A549 (cell line): ENCODE measurements at regions of chr1 and their contacts with region 1.

Region 1: DNA sequence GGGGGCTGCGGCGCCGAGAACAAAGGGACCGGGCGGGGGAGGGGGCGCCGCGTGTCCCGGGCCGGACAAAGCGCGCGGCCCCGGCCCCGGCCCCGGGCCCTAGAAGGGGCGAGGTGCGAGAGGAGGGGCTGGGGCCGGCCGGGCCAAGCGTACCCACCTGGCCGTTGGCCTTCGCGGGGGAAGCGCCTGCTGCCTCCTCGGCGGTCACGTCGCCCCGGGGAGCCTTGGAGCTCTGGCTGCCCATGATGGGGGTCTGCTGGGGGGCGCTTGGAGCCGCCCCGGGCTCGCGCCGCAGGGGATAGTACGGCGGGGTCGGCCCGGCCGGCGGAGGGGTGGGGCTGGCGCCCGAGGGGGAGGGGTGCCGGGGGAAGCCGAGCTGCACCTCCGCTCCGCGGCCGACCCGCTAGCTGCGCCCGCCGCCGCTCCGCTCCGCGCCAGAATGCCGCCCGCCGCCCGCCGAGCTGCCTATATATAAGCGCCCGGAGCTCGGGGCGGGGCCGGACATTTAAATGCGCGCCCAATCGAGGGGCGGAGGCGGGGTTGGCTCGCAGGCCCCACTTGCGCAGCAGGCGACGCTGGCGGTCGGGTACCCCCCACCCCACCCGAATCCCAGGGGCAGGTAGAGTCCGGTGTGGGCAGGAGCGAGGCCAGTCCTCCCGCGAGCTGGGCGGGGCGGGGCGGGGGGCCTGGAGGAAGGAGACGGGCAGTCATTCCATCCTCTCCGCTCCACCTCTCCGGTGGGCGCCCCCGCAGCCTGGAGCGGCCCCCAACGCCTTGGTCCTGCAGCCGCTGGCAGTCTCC is at the start of gene MARCKSL1:
- DNase-seq: peak; percentile 43 to 54
- ATAC-seq: peak; percentile 62 to 73
- H3K4me3 ChIP-seq: peak within 1 kb of the TSS; percentile 100
- H3K27ac ChIP-seq: peak within 1 kb of the TSS; percentile 96 to 98
- H3K4me1 ChIP-seq: peaks cover 33% of the 10 kb centered on the region
- CTCF ChIP-seq: no peak
- EP300 ChIP-seq: no peak
- POLR2A ChIP-seq: peak; percentile 90
- RAD21 ChIP-seq: no peak
- polyA plus RNA-seq, gene MARCKSL1: 73.2 and 89.4 TPM in 2 replicates

Region 2: GRCh38 chr1:32240140-32240951 is 95.6 kb before region 1 on chr1:
- CTCF ChIA-PET with region 1: interaction called, 3 read pairs
- POLR2A ChIA-PET with region 1: interaction called, 16 read pairs
- DNase-seq: peak; percentile 53 to 75
- ATAC-seq: peak; percentile 76 to 85
- H3K4me3 ChIP-seq: peak overlapping the region; percentile 56
- H3K27ac ChIP-seq: peak overlapping the region; percentile 79 to 94
- H3K4me1 ChIP-seq: peaks cover 41% of the 10 kb centered on the region
- CTCF ChIP-seq: peak; percentile 36
- EP300 ChIP-seq: no peak
- POLR2A ChIP-seq: peak; percentile 71
- RAD21 ChIP-seq: peak; percentile 6 to 37; a peak in 2 of 5 replicates

Region 3: DNA sequence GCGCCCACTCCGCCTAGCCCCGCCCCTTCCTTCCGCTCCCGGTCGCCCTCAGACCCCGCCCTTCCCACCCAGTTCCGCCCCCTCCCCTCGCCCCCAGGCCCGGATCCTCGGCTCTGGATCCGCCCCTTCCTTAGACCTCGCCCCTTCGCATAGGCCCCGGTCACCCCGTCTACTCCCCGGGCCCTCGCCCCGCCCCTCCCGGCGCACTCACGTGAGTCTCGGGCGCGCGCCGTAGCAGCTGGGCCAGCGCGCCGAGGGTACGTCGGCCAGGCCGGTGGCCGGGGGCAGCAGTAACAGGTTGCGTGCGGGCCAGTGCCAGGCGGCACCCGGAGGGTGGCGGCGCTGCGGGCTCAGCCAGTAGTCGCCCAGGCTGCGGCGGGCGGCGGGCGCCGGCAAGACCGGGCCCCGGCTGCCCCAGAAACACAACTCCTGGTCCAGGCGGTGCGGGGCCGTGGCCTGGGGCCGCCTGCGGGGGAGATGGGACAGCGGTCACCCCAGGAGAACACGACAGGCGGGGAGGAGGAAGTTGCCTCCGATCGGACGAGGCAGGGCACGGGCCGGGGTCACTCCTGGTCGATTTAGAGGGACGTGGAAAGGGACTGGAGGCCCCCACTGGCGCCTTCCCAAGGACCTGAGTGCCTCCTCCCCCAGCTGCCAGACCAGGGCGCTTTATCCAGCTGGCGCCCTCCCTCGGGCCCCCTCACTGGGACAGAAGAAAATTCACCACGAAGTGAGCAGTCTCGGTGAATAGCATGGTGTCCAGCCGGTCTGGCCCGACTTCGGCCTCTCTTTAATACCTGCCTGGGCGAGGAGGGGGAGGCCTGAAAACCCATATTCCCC is 15.6 kb after region 1 on chr1:
- CTCF ChIA-PET with region 1: interaction called, 3 read pairs
- POLR2A ChIA-PET with region 1: interaction called, 17 read pairs
- DNase-seq: peak; percentile 82 to 92
- ATAC-seq: peak; percentile 84 to 93
- H3K4me3 ChIP-seq: peak overlapping the region; percentile 83
- H3K27ac ChIP-seq: peak overlapping the region; percentile 96 to 98
- H3K4me1 ChIP-seq: peaks cover 7% of the 10 kb centered on the region
- CTCF ChIP-seq: no peak; the same call in 2 of the 3 replicates
- EP300 ChIP-seq: no peak
- POLR2A ChIP-seq: peak; percentile 78
- RAD21 ChIP-seq: no peak; a peak in 1 of 5 replicates

Region 4: DNA sequence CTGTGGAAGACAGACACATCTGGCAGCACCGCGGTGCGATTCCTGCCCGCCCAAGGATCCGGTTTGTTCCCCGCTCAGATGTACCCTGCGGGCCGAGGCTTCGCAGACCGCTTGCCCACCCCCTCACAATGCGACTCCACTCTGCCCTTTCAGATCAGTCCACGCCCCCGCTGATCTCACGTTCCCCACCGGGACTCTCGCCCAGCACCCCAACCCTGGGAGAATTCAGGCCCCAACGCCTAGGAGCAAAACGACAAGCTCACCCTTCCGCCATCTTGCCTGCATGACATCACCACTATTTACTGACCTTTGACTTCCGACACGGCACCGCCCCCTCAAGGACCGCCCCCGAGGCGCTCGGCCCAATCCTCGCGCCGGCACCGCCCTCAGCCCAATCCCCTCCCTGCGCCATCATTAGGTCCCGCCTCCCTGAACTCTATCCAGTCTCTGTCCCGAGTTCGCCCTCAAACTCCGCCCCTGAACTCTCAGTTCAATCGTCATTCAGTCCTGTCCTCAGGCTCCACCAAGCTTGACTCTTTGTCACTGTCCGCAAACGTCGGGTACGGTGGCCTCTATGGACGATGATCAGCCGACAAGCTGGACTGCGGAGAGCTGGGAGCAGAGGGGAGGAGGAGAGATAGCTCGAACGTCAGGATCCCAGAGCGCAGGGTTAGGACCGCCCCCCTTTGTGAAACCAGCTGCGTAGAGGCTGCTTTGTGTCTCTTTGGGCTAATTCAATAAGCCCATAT is 58.3 kb after region 1 on chr1 and contains the start of gene BSDC1:
- CTCF ChIA-PET with region 1: no interaction called
- POLR2A ChIA-PET with region 1: interaction called, 10 read pairs
- DNase-seq: peak; percentile 89 to 97
- ATAC-seq: peak; percentile 95 to 97
- H3K4me3 ChIP-seq: peak within 1 kb of the TSS; percentile 79
- H3K27ac ChIP-seq: peak within 1 kb of the TSS; percentile 81 to 89
- H3K4me1 ChIP-seq: peaks cover 17% of the 10 kb centered on the region
- CTCF ChIP-seq: no peak
- EP300 ChIP-seq: no peak
- POLR2A ChIP-seq: peak; percentile 56
- RAD21 ChIP-seq: no peak
- polyA plus RNA-seq, gene BSDC1: 19.9 and 26.1 TPM in 2 replicates